Activated T-helper 1 cell treated with anti-CD3 and anti-CD28 coated beads, Interleukin-12 subunit alpha, Interleukin-12 subunit beta, Interleukin-2, Interleukin-4 antibody, amounts not matched to agents 30 ng/mL and 10 ng/mL and 1 ng/mL, durations not matched to agents 14 hours and 24 hours and 36 hours (primary cell): ENCODE measurements at regions of chr2 and their contacts with region 1.

Region 1: DNA sequence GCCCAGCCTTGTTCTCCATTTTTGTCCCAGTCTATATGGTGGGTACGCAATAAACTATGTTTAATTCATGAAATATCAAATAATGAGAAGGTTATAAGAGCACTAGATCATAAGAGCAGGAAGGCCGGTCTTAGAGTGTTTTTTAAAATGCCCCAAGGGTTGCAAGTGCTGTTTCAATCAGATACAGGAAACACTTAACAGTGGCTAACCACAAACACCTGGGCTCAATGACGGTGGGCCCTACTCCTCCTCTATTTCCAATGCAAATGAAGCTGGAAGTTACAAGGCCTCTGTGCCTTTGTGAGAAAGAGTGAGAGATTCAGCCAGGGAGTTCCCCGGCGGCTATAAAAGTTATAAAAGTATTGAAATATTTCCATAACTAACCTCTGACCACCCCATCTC is 18.9 kb upstream of the WDR33 start:
- DNase-seq: peak; percentile 62
- H3K4me3 Mint-ChIP-seq: peak overlapping the region; percentile 20
- H3K27ac Mint-ChIP-seq: peak overlapping the region; percentile 85
- H3K4me1 Mint-ChIP-seq: peaks cover 45% of the 10 kb centered on the region
- H3K27me3 Mint-ChIP-seq: peaks cover 4% of the 10 kb centered on the region

Region 2: GRCh38 chr2:127197475-127198385 is 632.1 kb before region 1 on chr2:
- intact Hi-C with region 1: no loop called
- DNase-seq: peak; percentile 13
- H3K4me3 Mint-ChIP-seq: peak overlapping the region; percentile 81
- H3K27ac Mint-ChIP-seq: peak overlapping the region; percentile 8
- H3K4me1 Mint-ChIP-seq: peaks cover 7% of the 10 kb centered on the region
- H3K27me3 Mint-ChIP-seq: peaks cover 4% of the 10 kb centered on the region

Region 3: DNA sequence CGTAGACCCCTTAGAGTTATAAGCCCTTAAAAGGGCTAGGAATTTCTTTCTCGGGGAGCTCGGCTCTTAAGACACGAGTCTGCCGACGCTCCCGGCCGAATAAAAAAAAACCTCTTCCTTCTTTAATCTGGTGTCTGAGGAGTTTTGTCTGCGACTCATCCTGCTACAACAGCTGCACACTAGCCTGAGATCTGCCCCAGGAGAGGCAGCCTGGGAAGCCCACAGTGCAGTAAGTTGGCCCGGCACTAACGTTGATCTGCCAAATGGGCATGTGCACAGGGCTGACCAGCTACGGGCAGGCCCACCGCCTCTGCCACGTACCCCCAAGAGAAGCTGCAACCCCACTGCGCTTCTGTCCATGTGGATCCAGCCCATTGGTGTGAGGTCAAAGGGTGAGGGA is 146.1 kb before region 1 on chr2:
- intact Hi-C with region 1: no loop called
- DNase-seq: no peak
- H3K4me3 Mint-ChIP-seq: no peak overlapping the region
- H3K27ac Mint-ChIP-seq: no peak overlapping the region
- H3K4me1 Mint-ChIP-seq: no peaks in the 10 kb centered on the region
- H3K27me3 Mint-ChIP-seq: peaks cover 19% of the 10 kb centered on the region

Region 4: DNA sequence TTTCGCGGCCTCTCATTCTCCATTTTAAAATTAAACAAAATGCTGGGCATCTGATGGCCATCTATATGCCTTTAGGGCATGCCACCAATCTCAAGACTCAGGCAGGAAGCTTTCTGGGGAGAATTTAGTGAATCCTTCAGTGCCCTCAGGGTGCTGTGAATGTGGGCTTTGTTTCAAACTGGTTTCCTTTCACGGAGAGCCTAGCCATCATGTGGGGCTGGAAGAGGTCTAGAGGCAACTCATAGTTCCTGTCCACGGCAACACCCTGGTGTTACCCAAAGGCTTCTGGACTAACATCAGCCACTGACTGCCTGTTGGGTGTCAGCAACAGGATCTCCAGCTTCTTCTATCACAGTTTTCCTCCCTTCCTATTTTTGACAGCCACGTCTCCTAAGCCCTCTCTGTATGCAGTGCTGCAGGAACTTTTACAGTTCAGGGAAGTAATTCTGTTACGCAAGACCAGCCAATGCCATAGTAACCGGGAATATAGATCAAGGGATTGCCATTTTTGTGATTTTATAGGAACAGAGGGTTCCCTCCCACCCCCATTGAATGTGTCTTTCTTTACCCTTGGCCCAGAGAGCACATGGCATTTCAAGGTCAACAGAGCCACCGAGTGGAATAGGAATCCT is 10.9 kb before region 1 on chr2:
- intact Hi-C with region 1: no loop called
- DNase-seq: no peak
- H3K4me3 Mint-ChIP-seq: no peak overlapping the region
- H3K27ac Mint-ChIP-seq: no peak overlapping the region
- H3K4me1 Mint-ChIP-seq: no peaks in the 10 kb centered on the region
- H3K27me3 Mint-ChIP-seq: peaks cover 27% of the 10 kb centered on the region

Region 5: GRCh38 chr2:127847931-127848330 is 18.1 kb after region 1 on chr2:
- intact Hi-C with region 1: loop called (anchors 2 kb)
- DNase-seq: no peak
- H3K4me3 Mint-ChIP-seq: no peak overlapping the region
- H3K27ac Mint-ChIP-seq: peak overlapping the region; percentile 23
- H3K4me1 Mint-ChIP-seq: peaks cover 13% of the 10 kb centered on the region
- H3K27me3 Mint-ChIP-seq: no peaks in the 10 kb centered on the region